HEK293 (cell line): ENCODE measurements at regions of chrX and their contacts with region 1.

Region 1: DNA sequence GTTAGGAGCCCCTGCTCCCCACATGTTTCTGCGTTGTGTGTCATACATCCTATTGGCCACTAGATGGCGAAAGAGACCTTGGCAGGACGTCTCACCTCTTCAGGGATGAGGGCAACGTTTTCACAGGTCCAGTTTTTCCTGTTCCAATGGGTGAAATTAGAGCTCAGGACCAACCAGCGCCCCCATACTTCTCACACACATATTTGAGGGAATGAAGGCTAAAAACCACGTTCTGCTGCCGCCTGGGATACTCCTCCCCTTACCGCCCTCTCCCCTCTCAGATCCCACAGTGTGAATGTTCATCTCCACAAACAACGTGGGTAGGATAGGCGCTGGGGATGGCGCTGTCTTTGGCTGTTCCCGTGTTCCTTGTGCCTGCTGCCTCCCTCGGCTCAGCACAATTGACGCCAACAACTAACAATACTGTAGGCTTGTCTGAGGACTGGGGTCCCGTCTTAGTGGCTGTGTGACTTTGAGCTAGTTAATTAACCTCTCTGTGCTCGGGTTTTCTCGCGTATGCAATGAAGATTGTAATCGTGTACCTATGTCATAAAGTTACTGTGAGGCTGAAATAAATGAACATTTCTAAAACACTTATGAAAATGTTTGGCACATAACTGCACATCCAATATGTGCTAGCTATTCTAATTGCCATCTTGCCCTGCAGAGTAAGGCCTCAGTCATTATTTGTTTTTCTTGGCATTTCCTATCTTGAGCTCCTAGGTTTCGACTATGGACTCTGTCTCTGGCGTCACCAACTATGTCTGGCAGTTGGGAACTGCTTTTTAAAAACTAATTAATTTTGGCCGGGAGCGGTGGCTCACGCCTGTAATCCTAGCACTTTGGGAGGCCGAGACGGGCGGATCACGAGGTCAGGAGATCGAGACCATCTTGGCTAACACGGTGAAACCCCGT is 181.3 kb upstream of the STK26 start:
- H3K4me3 ChIP-seq: no peak overlapping the region
- H3K27ac ChIP-seq: no peak overlapping the region
- H3K4me1 ChIP-seq: peaks cover 7% of the 10 kb centered on the region; the same call in 1 of the 2 replicates
- CTCF ChIP-seq: peak; percentile 89

Region 2: GRCh38 chrX:131812836-131813825 is 28.6 kb before region 1 on chrX:
- CTCF ChIA-PET with region 1: no interaction called
- POLR2A ChIA-PET with region 1: no interaction called
- H3K4me3 ChIP-seq: no peak overlapping the region
- H3K27ac ChIP-seq: peak overlapping the region; percentile 76; the same call in 1 of the 2 replicates
- H3K4me1 ChIP-seq: no peaks in the 10 kb centered on the region
- CTCF ChIP-seq: peak; percentile 83

Region 3: DNA sequence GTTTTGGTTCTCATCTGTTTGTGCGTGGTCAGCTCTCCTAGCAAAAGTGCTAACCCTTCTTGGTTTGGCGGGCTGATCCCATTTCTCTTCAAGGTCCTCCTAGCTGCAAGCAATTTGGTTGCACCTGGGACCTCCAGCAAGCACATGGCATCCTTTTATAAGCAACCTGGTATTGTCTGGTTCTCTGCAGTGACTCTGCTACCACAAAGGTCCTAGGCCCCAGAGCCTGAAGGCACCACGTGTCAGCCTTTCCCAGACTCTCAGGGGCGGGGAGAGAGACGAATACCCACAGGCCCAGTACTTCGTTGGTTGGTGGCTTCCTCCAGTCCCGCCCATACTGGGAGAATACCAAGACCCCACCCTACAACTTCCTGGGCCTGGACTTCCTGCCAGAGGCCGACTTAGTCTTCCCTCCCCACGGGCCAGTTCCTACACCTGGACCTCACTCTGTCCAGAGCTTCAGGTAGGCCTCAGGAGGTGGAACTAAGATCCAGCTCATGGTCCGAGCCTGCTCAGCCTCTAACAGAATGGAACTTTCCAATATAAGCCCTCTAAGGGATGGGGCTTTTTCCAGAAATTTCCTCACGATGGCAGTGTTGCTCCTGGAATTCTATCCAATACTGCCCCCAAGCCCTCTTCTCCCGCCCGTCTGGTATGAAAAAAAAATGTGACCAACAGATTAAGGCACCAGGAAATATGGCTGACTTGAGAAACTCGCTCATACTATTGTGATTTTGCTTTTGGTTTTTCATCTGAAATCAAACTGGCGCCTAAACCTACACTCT is 11.2 kb before region 1 on chrX:
- CTCF ChIA-PET with region 1: interaction called, 28 read pairs
- POLR2A ChIA-PET with region 1: interaction called, 3 read pairs
- H3K4me3 ChIP-seq: peak overlapping the region; percentile 20
- H3K27ac ChIP-seq: peak overlapping the region; percentile 78
- H3K4me1 ChIP-seq: peaks cover 3% of the 10 kb centered on the region; the same call in 1 of the 2 replicates
- CTCF ChIP-seq: peak; percentile 99

Region 4: GRCh38 chrX:131854581-131854980 is 12.8 kb after region 1 on chrX:
- CTCF ChIA-PET with region 1: interaction called, 18 read pairs
- POLR2A ChIA-PET with region 1: no interaction called
- H3K4me3 ChIP-seq: no peak overlapping the region
- H3K27ac ChIP-seq: no peak overlapping the region
- H3K4me1 ChIP-seq: no peaks in the 10 kb centered on the region
- CTCF ChIP-seq: peak; percentile 80

Region 5: DNA sequence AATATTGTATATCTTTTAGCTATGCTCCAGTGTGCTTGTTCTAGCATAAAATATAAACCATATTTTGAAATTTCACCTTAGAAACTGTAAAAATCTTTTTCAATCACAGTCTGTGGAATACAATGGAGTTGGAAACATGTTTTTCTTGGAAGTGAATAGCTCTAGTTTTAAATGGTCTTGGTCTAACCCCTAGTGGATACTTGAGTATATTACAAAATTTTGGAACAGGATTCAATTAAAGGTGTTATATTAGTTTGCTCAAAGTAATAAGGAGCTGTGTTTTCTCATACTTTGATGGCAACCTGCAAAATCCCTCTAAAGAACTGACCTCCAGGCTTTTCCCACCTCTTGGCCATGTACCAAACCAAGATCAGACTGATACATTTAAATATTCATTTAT is 229.5 kb after region 1 on chrX:
- CTCF ChIA-PET with region 1: interaction called, 51 read pairs
- POLR2A ChIA-PET with region 1: no interaction called
- H3K4me3 ChIP-seq: no peak overlapping the region
- H3K27ac ChIP-seq: no peak overlapping the region
- H3K4me1 ChIP-seq: no peaks in the 10 kb centered on the region
- CTCF ChIP-seq: no peak

Region 6: DNA sequence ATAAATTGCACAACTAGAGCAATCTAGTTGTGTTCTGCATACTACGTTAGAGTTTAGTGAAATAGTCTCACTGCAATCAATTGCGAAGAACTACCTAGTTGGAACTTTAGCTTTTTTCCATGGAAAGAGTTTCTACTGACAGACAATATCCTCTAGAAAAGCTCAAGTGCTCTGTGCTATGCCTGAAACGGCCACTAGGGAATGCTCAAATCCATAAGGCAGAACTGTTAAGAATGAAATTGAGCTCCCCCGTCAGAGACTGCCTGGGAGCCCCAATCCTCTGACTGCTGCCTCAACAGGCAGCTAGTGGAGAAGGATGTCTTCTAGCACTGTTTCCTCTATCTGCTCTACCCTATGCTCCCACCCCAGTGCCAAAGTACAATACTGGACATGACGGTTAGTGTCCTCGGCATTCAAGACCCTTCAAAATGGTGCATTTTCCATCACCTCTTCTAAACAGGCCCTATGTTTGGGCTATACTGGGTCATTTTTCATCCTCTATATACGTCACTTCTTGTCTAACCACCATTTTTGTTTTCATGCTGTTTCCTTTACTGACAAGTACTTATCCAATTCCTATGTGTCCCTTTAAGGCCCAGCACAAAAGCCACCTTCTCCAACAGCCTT is 250.8 kb after region 1 on chrX:
- CTCF ChIA-PET with region 1: interaction called, 10 read pairs
- POLR2A ChIA-PET with region 1: no interaction called
- H3K4me3 ChIP-seq: no peak overlapping the region
- H3K27ac ChIP-seq: no peak overlapping the region
- H3K4me1 ChIP-seq: no peaks in the 10 kb centered on the region
- CTCF ChIP-seq: 0 out of 2 replicates have a peak, but pooled peaks have one; percentile 49

Region 7: GRCh38 chrX:132219343-132219768 is 377.6 kb after region 1 on chrX and contains the start of gene RAP2C:
- CTCF ChIA-PET with region 1: interaction called, 15 read pairs
- POLR2A ChIA-PET with region 1: no interaction called
- H3K4me3 ChIP-seq: peak within 1 kb of the TSS; percentile 70
- H3K27ac ChIP-seq: peak within 1 kb of the TSS; percentile 95
- H3K4me1 ChIP-seq: peaks cover 3% of the 10 kb centered on the region; the same call in 1 of the 2 replicates
- CTCF ChIP-seq: peak; percentile 78